ENCODE measurements at regions of chr13 and their contacts with region 1.

Region 1: DNA sequence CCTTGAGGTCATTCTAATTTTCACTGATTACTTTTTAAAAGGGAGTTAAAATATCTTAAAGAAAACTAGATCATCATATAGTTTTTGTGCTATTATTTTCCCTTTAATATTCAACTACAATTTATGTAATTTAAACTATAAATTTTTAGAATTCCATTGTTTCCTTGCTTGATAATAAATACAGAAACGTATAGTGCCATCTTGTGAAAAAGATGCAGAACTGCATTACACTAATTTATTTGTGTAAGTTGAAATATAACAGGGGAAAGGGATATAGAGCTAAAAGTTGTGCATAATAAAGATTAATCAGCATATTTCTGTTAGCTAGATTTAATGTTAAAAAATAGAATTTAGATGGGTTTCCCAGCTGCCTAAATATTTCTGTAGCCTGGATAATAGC is 61.5 kb upstream of the TDRD3 start:
- DNase-seq: no peak
- ATAC-seq: no peak
- H3K4me3 ChIP-seq: no peak overlapping the region
- H3K27ac ChIP-seq: no peak overlapping the region
- H3K4me1 ChIP-seq: no peaks in the 10 kb centered on the region
- H3K27me3 ChIP-seq: peaks cover 0 to 5% (median 0%) of the 10 kb centered on the region in 7 donors
- CTCF ChIP-seq: peak in 8 of 9 donors; percentile 18 to 71 (median 64)

Region 2: DNA sequence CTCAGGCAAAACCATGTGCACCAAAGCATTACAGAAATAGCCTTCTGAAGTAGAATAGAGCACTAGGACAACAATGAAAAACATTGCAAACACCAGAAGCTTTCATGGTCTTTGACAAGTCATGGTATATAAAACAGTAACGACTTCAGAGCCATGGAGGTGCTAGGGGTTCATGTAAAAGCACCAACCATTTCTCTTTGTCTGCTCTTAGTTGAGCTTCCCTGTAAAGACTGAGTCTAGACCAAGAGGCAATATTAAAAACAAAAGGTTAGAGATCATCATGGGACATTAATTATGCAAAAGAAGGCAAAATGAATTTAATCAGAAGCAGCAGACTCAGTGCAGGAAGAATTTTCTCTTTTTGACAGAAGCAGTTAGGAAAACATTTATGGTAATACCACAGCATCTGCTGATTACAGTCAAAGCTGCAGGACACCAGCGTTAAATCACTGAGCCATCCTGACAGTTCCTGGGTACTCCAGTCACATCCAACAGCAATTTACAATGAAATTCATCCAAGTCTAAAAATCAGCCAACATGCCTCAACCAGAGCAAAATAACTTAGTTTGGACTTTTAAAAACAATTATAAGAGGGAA is 648.6 kb before region 1 on chr13:
- intact Hi-C with region 1: loop called in 1 of 10 experiments (anchors 5 kb)
- DNase-seq: no peak
- ATAC-seq: no peak
- H3K4me3 ChIP-seq: no peak overlapping the region
- H3K27ac ChIP-seq: no peak overlapping the region
- H3K4me1 ChIP-seq: no peaks in the 10 kb centered on the region
- H3K27me3 ChIP-seq: no peaks in the 10 kb centered on the region
- CTCF ChIP-seq: no peak

Region 3: DNA sequence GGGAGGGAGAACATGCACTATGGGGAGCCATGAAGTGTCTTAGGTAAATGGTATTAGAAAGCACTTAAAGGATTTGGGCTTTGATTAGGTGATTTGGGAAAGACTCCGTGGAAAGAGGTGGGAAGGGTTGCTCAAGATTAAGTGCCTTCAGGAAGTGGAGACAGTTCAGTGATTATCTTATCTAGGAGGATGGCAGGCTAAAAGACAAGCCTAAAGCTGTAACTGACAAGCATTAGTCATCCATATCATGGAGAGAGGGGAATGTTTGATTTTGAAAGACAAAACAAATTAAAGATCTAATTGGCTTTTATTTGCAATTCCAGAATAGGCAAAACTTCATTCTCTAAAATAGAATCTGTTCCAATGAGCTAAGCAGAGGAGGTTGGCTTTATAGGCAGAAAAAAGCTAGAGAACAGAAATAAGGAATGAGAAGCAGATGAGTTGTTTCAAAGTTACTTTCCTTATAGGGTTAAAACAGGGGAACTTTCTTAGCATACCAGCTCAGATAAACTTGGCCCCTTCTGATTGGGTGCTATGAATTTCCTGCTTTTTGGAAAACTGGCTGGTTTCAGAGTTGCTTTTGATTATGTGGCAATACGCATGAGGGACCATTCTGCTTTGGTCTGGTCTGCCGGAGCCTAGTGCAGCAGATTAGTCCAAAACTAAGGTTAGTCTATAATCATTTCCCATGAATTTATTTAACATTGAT is 170.0 kb before region 1 on chr13:
- intact Hi-C with region 1: no loop called
- DNase-seq: no peak
- ATAC-seq: no peak
- H3K4me3 ChIP-seq: peak overlapping the region in 6 of 10 donors; percentile 62 to 85 (median 72)
- H3K27ac ChIP-seq: peak overlapping the region; percentile 0 to 95 (median 91)
- H3K4me1 ChIP-seq: peaks cover 3 to 25% (median 20%) of the 10 kb centered on the region in 9 donors
- H3K27me3 ChIP-seq: no peaks in the 10 kb centered on the region
- CTCF ChIP-seq: no peak

Region 4: GRCh38 chr13:60431108-60431700 is 95.7 kb after region 1 on chr13:
- intact Hi-C with region 1: loop called in 4 of 10 experiments (anchors 10 kb)
- DNase-seq: no peak
- ATAC-seq: peak in 6 of 8 donors; percentile 60 to 79 (median 76)
- H3K4me3 ChIP-seq: no peak overlapping the region
- H3K27ac ChIP-seq: no peak overlapping the region
- H3K4me1 ChIP-seq: no peaks in the 10 kb centered on the region
- H3K27me3 ChIP-seq: no peaks in the 10 kb centered on the region
- CTCF ChIP-seq: peak; percentile 83 to 97 (median 93)

Measured in heart right ventricle (tissue), 16 donors.